MCF 10A (cell line): ENCODE measurements at regions of chr10 and their contacts with region 1.

Region 1: GRCh38 chr10:84531396-84531795 is 203.0 kb downstream of the CCSER2 start:
- DNase-seq: no peak
- H3K4me3 Mint-ChIP-seq: no peak overlapping the region
- H3K27ac Mint-ChIP-seq: no peak overlapping the region
- H3K4me1 Mint-ChIP-seq: peaks cover 5% of the 10 kb centered on the region
- H3K27me3 Mint-ChIP-seq: no peaks in the 10 kb centered on the region
- CTCF ChIP-seq: no peak

Region 2: DNA sequence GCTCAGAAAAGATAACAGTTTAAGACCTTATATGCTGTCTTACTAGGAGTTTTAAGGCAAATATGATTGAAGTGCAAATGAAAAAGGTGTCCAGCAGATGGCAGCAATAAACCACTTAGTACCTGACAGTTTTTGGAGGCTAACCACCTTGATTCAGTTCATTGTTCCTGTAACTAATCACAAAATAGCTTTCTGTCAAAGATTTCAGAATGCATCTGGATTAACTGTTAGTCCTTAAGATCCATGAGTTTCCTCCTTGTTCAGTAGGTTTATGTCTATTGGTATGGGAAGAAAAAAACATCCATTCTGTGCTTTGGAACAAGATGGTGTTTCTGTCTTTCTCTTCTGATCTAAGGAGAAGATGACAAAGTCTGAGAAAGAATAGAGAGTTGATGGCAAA is 156.4 kb before region 1 on chr10:
- CTCF ChIA-PET with region 1: interaction called, 188 read pairs
- POLR2A ChIA-PET with region 1: no interaction called
- intact Hi-C with region 1: no loop called
- DNase-seq: peak; percentile 70
- H3K4me3 Mint-ChIP-seq: no peak overlapping the region
- H3K27ac Mint-ChIP-seq: no peak overlapping the region
- H3K4me1 Mint-ChIP-seq: peaks cover 5% of the 10 kb centered on the region
- H3K27me3 Mint-ChIP-seq: no peaks in the 10 kb centered on the region
- CTCF ChIP-seq: peak; percentile 68